ENCODE measurements at regions of chr1 and their contacts with region 1.

Region 1: DNA sequence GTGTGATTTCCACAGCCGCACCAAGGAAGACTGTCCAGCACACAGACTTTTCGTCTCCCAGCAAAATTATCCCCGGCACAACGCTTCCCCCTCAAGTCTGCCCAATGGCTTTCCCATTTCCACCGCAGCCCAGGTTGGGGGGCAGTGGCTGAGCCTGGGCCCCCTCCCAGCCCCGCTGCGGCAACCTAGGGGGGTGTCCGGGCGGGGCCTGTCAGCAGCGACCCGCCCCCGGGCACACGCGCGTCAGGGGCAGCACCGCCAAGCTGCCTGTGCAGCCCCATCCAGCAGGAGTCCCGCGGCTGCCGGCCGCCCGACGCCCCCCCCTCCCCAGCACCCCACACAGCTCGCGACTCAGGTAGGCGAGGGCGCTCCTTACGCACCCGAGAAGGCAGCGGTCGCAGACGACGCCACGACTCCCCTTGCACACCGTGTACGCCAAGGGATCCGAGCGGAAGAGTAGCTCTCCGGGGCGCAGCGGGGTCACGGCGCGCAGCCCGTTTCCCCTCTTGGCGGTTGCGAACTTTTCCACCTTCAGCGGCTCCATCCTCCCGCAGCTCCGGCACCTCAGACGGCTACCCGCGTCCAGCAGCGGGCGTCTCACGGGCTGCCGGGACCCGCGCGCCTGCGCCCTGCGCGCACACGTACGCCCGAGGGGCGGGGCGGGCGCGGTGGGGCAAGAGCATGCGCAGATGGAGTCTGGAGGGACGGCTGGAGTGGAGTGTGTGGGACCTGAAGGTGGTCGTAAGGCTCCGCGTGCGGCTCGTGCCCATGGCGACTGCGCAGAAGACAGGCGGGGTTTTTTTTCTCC is at the start of gene SMYD3:
- DNase-seq: peak; percentile 80
- ATAC-seq: peak; percentile 95
- H3K4me3 Mint-ChIP-seq: peak within 1 kb of the TSS; percentile 92
- H3K27ac Mint-ChIP-seq: peak within 1 kb of the TSS; percentile 85
- H3K4me1 Mint-ChIP-seq: peaks cover 23% of the 10 kb centered on the region
- H3K27me3 Mint-ChIP-seq: no peaks in the 10 kb centered on the region
- total RNA-seq, gene SMYD3: 22.6 to 27.0 TPM

Region 2: GRCh38 chr1:246527402-246528088 is 20.7 kb after region 1 on chr1:
- POLR2A ChIA-PET with region 1: interaction called, 20 read pairs
- DNase-seq: peak; percentile 52
- ATAC-seq: peak; percentile 94
- H3K4me3 Mint-ChIP-seq: peak overlapping the region; percentile 64
- H3K27ac Mint-ChIP-seq: peak overlapping the region; percentile 95
- H3K4me1 Mint-ChIP-seq: peaks cover 10% of the 10 kb centered on the region
- H3K27me3 Mint-ChIP-seq: peaks cover 11% of the 10 kb centered on the region

Region 3: GRCh38 chr1:246566128-246566812 is 59.4 kb after region 1 on chr1 and contains the starts of genes CNST and TFB2M:
- POLR2A ChIA-PET with region 1: interaction called, 19 read pairs
- DNase-seq: peak; percentile 93
- ATAC-seq: peak; percentile 85
- H3K4me3 Mint-ChIP-seq: peak within 1 kb of the TSS; percentile 98
- H3K27ac Mint-ChIP-seq: peak within 1 kb of the TSS; percentile 96
- H3K4me1 Mint-ChIP-seq: peaks cover 34% of the 10 kb centered on the region
- H3K27me3 Mint-ChIP-seq: no peaks in the 10 kb centered on the region
- total RNA-seq, gene CNST: 36.1 to 36.5 TPM
- total RNA-seq, gene TFB2M: 9.8 to 10.9 TPM

Region 4: GRCh38 chr1:246583056-246583848 is 76.4 kb after region 1 on chr1:
- POLR2A ChIA-PET with region 1: no interaction called
- DNase-seq: no peak
- ATAC-seq: no peak
- H3K4me3 Mint-ChIP-seq: no peak overlapping the region
- H3K27ac Mint-ChIP-seq: no peak overlapping the region
- H3K4me1 Mint-ChIP-seq: peaks cover 14% of the 10 kb centered on the region
- H3K27me3 Mint-ChIP-seq: no peaks in the 10 kb centered on the region